Activated B cell treated with CpG ODN at 0.5 μM for 24 hours (primary cell): ENCODE measurements at regions of chr1 and their contacts with region 1.

Region 1: DNA sequence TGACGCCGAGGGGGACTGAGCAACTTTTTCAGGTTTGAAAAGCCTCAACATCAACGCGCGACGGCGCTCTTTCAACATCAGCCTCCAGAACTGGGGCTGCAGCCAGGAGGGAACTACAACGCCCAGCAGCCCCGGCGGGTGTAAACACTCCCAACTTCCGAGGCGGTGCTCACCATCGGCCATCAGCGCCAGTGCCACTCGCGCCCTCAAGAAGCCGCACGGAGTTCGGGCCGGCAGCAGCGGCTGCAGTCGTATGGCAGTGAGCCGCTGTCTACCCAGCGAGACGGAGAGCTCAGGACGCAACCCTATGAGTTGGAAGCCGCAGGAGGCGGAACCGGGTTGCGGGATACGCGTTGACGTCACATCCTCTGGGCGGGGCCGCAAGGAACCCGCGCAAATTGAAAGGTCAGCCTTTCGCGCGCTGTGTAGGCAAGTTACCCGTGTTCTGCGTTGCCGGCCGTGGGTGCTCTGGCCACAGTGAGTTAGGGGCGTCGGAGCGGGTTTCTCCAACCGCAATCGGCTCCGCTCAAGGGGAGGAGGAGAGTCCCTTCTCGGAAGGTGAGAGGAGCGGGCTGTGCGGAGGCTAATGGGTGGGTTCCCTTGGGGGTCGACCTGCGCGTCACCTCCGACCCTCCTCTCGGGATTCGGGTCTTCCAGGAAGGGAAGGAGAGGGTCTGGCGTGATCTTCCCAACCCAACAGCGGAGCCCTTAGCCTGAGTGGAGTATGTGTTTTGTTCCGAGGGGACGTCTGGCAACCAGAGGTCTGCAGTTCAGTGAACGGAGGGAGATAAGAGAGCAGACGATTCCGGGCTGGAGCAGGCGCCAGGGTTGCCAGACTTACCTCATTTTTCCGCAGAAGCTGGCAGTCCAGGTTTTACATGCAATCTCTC is at the start of gene EXO1:
- DNase-seq: peak; percentile 91
- ATAC-seq: peak; percentile 98
- H3K4me3 Mint-ChIP-seq: peak within 1 kb of the TSS; percentile 100
- H3K27ac Mint-ChIP-seq: peak within 1 kb of the TSS; percentile 99
- H3K4me1 Mint-ChIP-seq: peaks cover 15% of the 10 kb centered on the region
- H3K27me3 Mint-ChIP-seq: no peaks in the 10 kb centered on the region
- CTCF ChIP-seq: no peak
- total RNA-seq, gene EXO1: 2.3 TPM in 2 replicates

Region 2: DNA sequence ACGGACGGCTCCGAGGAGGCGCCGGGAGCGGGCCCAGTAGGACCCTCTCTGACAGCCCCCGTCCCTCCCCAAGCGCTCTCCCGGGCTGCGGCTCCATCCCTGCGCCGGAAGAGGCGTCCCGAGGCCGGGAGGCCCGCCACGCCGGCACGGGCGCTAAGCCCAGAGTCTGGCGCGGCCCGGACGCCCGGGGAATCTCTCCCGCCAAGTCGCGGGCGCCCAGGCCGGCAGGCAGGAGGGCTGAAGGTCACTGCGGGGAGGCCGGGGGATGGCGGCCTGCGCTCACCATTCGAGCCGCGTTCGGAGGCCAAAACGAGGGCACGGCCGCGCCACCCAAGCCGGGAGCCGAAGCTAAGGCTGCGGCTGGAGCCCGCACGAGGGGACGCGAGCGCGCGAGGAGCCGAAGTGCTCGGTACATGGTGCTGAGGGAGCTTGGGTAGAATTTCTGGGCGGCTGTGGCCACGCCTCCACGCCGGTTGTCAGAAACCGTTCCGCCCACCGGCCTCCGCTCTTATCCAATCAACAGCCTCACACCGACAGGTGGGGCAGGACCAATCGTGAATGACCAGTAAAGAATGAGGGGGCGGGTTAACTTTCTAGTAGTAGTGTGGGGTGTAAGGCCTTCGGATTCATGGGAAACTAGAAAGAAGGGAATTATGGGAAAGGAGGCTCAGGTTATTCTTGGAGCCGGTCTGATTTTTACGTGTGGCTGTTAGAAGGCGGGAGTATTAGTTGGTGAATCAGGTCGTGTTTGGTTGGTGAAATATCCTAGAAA is 328.5 kb before region 1 on chr1 and contains the start of gene FH:
- CTCF ChIA-PET with region 1: no interaction called
- POLR2A ChIA-PET with region 1: interaction called, 6 read pairs
- intact Hi-C with region 1: loop called (anchors 1 kb)
- DNase-seq: peak; percentile 87
- ATAC-seq: peak; percentile 98
- H3K4me3 Mint-ChIP-seq: peak within 1 kb of the TSS; percentile 91
- H3K27ac Mint-ChIP-seq: peak within 1 kb of the TSS; percentile 72
- H3K4me1 Mint-ChIP-seq: peaks cover 21% of the 10 kb centered on the region
- H3K27me3 Mint-ChIP-seq: no peaks in the 10 kb centered on the region
- CTCF ChIP-seq: no peak
- total RNA-seq, gene FH: 56.0 and 58.3 TPM in 2 replicates

Region 3: GRCh38 chr1:241551759-241552638 is 296.0 kb before region 1 on chr1:
- CTCF ChIA-PET with region 1: no interaction called
- POLR2A ChIA-PET with region 1: interaction called, 3 read pairs
- intact Hi-C with region 1: loop called (anchors 1 kb)
- DNase-seq: peak; percentile 46
- ATAC-seq: peak; percentile 89
- H3K4me3 Mint-ChIP-seq: peak overlapping the region; percentile 83
- H3K27ac Mint-ChIP-seq: peak overlapping the region; percentile 100
- H3K4me1 Mint-ChIP-seq: peaks cover 62% of the 10 kb centered on the region
- H3K27me3 Mint-ChIP-seq: peaks cover 2% of the 10 kb centered on the region
- CTCF ChIP-seq: no peak

Region 4: DNA sequence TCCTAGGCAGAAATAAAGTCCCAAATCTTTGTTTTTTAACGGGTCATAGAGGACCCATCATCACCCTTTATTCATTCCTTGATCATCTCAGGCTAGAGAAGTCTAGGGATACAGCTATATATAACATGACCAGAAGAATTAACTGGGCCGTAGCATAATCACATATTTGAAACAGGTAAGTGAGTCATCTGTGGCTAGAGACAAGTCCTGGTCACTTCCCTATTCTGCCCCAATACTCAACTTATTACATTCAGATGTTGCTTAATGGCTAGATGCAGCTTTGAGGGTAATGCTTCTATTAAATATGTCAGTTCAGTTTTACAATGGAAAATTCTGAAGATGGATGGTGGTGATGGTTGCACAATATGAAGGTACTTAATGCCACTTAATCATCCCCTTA is 47.0 kb after region 1 on chr1:
- CTCF ChIA-PET with region 1: interaction called, 3 read pairs
- POLR2A ChIA-PET with region 1: no interaction called
- intact Hi-C with region 1: loop called (anchors 2 kb)
- DNase-seq: no peak
- ATAC-seq: no peak
- H3K4me3 Mint-ChIP-seq: no peak overlapping the region
- H3K27ac Mint-ChIP-seq: no peak overlapping the region
- H3K4me1 Mint-ChIP-seq: peaks cover 15% of the 10 kb centered on the region
- H3K27me3 Mint-ChIP-seq: no peaks in the 10 kb centered on the region
- CTCF ChIP-seq: no peak

Region 5: GRCh38 chr1:241998412-241998921 is 150.4 kb after region 1 on chr1:
- CTCF ChIA-PET with region 1: interaction called, 5 read pairs
- POLR2A ChIA-PET with region 1: no interaction called
- intact Hi-C with region 1: loop called (anchors 1 kb)
- DNase-seq: peak; percentile 52
- ATAC-seq: peak; percentile 88
- H3K4me3 Mint-ChIP-seq: peak overlapping the region; percentile 80
- H3K27ac Mint-ChIP-seq: no peak overlapping the region
- H3K4me1 Mint-ChIP-seq: peaks cover 5% of the 10 kb centered on the region
- H3K27me3 Mint-ChIP-seq: peaks cover 5% of the 10 kb centered on the region
- CTCF ChIP-seq: no peak